ENCODE measurements at regions of chr11 and their contacts with region 1.

Region 1: GRCh38 chr11:24267014-24267413 is 229.8 kb upstream of the LUZP2 start:
- DNase-seq: no peak
- ATAC-seq: no peak
- H3K4me3 ChIP-seq: no peak overlapping the region
- H3K27ac ChIP-seq: no peak overlapping the region
- H3K4me1 ChIP-seq: no peaks in the 10 kb centered on the region
- H3K27me3 ChIP-seq: no peaks in the 10 kb centered on the region
- CTCF ChIP-seq: no peak
- POLR2A ChIP-seq: no peak
- RAD21 ChIP-seq: no peak

Region 2: GRCh38 chr11:23226331-23227077 is 1040.5 kb before region 1 on chr11:
- CTCF ChIA-PET with region 1: no interaction called
- POLR2A ChIA-PET with region 1: no interaction called
- dilution Hi-C with region 1: no loop called
- in situ Hi-C with region 1: no loop called
- intact Hi-C with region 1: no loop called
- DNase-seq: peak; percentile 77
- ATAC-seq: peak; percentile 91
- H3K4me3 ChIP-seq: no peak overlapping the region
- H3K27ac ChIP-seq: peak overlapping the region; percentile 66; the same call in 1 of the 2 replicates
- H3K4me1 ChIP-seq: peaks cover 3% of the 10 kb centered on the region; the same call in 1 of the 2 replicates
- H3K27me3 ChIP-seq: no peaks in the 10 kb centered on the region
- CTCF ChIP-seq: no peak
- POLR2A ChIP-seq: no peak
- RAD21 ChIP-seq: no peak

Region 3: GRCh38 chr11:24373516-24373915 is 106.5 kb after region 1 on chr11:
- CTCF ChIA-PET with region 1: no interaction called
- POLR2A ChIA-PET with region 1: no interaction called
- dilution Hi-C with region 1: no loop called
- in situ Hi-C with region 1: no loop called
- intact Hi-C with region 1: loop called (anchors 10 kb)
- DNase-seq: peak; percentile 3
- ATAC-seq: peak; percentile 46; the same call in 1 of the 2 replicates
- H3K4me3 ChIP-seq: no peak overlapping the region
- H3K27ac ChIP-seq: no peak overlapping the region
- H3K4me1 ChIP-seq: no peaks in the 10 kb centered on the region
- H3K27me3 ChIP-seq: no peaks in the 10 kb centered on the region
- CTCF ChIP-seq: no peak
- POLR2A ChIP-seq: no peak
- RAD21 ChIP-seq: no peak

Region 4: GRCh38 chr11:24386546-24387397 is 119.8 kb after region 1 on chr11:
- CTCF ChIA-PET with region 1: no interaction called
- POLR2A ChIA-PET with region 1: no interaction called
- dilution Hi-C with region 1: no loop called
- in situ Hi-C with region 1: no loop called
- intact Hi-C with region 1: no loop called
- DNase-seq: peak; percentile 68
- ATAC-seq: peak; percentile 75
- H3K4me3 ChIP-seq: no peak overlapping the region
- H3K27ac ChIP-seq: peak overlapping the region; percentile 22; the same call in 1 of the 2 replicates
- H3K4me1 ChIP-seq: peaks cover 3% of the 10 kb centered on the region; the same call in 1 of the 2 replicates
- H3K27me3 ChIP-seq: no peaks in the 10 kb centered on the region
- CTCF ChIP-seq: peak; percentile 71
- POLR2A ChIP-seq: no peak
- RAD21 ChIP-seq: peak; percentile 71

Measured in IMR-90 (cell line).